ENCODE measurements at regions of chr14 and their contacts with region 1.

Region 1: DNA sequence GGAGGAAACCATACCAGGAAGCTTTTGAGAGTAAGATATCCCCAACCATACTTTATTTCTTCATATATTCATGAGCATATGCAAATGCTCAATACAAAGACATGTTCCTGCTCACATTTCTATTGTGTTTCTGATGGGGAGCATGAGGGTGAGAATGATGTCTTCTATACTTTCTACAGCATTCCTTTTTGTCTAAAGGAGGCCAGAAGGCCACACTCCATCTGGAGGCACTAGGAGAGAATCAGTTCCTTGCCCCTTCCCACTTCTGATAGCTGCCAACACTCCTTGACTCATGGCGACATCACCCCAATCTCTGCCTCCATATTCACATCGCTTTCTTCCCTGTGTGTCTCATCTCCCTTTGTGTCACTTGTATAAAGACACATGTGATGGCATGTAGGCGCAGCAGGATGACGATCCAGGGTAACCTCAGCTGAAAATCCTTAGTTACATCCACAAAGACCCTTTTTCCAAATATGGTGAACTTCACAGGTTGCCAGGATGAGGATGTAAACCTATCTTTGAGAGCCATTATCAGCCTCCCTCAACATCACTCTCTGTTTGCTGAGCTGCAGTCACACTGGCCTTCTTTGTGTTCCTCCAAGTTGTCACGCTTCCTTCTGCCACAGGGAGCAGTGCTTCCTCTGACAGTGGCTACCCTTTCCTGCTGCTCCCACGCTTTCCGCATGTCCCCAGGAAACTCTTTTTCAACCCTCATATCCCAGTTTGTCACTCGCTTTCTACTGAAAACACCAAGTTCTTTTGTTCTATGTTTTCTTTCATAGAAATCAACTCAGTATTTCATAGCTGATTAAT is 96.9 kb downstream of the STXBP6 start:
- DNase-seq: no peak
- H3K4me3 Mint-ChIP-seq: no peak overlapping the region
- H3K27ac Mint-ChIP-seq: no peak overlapping the region
- H3K4me1 Mint-ChIP-seq: no peaks in the 10 kb centered on the region
- H3K27me3 Mint-ChIP-seq: peaks cover 1% of the 10 kb centered on the region

Region 2: GRCh38 chr14:23665375-23666192 is 1287.5 kb before region 1 on chr14:
- intact Hi-C with region 1: no loop called
- DNase-seq: no peak
- H3K4me3 Mint-ChIP-seq: no peak overlapping the region
- H3K27ac Mint-ChIP-seq: no peak overlapping the region
- H3K4me1 Mint-ChIP-seq: no peaks in the 10 kb centered on the region
- H3K27me3 Mint-ChIP-seq: peaks cover 7% of the 10 kb centered on the region

Region 3: DNA sequence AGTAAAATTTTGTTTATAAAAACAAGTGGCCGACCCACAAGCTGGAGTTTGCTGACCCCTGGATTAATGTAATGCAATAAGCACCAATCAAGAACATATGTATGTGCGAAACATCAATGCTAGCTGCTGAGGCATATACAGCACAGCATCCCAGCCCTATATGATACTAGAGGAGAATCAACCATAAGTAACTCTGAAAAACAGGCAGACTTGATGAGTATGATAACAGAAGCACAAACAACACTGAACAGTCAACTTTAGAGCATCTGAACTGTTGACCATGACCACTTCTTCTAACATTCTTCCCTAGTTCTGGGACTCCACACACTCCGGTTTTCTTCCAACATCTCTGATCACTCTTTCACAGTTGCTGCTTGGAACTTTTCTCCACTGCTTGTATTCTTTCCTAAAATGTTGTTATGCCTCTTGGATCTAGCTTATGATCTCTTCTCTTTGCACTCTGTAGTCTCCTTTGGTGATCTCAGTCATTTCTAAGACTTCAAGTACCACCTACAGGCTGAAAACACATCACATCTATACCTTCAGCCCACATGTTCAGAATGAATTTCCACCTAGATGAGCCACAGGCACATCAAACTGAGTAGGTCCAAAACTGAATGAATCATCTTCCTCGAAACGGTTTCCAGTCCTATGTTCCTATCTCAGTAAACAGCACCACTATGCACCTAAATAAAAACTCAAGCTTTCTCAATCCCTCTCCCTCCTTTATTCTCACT is 39.7 kb after region 1 on chr14:
- intact Hi-C with region 1: loop called (anchors 1 kb)
- DNase-seq: no peak
- H3K4me3 Mint-ChIP-seq: no peak overlapping the region
- H3K27ac Mint-ChIP-seq: no peak overlapping the region
- H3K4me1 Mint-ChIP-seq: no peaks in the 10 kb centered on the region
- H3K27me3 Mint-ChIP-seq: no peaks in the 10 kb centered on the region